Activated T-helper 1 cell treated with anti-CD3 and anti-CD28 coated beads, Interleukin-12 subunit alpha, Interleukin-12 subunit beta, Interleukin-2, Interleukin-4 antibody, amounts not matched to agents 30 ng/mL and 10 ng/mL and 1 ng/mL, durations not matched to agents 14 hours and 24 hours and 36 hours (primary cell): ENCODE measurements at regions of chr3 and their contacts with region 1.

Region 1: DNA sequence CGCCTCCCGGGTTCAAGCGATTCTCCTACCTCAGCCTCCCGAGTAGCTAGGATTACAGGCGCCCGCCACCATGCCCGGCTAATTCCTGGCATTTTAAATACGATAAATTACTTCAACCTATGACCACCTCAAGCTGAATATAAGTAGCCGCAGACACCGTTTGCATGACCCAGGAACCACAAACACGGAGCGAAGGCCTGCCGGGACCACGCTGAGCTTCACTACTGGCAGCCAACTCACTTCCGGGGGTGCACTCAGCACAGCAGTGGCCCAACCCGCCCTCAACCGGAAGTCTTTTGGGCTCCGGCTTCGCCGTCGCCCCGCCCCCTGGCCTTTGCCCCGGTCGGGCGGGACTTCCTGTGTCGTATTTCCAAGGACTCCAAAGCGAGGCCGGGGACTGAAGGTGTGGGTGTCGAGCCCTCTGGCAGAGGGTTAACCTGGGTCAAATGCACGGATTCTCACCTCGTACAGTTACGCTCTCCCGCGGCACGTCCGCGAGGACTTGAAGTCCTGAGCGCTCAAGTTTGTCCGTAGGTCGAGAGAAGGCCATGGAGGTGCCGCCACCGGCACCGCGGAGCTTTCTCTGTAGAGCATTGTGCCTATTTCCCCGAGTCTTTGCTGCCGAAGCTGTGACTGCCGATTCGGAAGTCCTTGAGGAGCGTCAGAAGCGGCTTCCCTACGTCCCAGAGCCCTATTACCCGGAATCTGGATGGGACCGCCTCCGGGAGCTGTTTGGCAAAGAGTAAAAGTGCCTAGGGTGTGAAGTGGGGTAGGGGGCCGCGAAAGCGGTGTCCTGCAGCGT is at the start of gene TIMMDC1:
- DNase-seq: peak; percentile 96
- H3K4me3 Mint-ChIP-seq: peak within 1 kb of the TSS; percentile 100
- H3K27ac Mint-ChIP-seq: peak within 1 kb of the TSS; percentile 99
- H3K4me1 Mint-ChIP-seq: peaks cover 33% of the 10 kb centered on the region
- H3K27me3 Mint-ChIP-seq: no peaks in the 10 kb centered on the region
- total RNA-seq, gene TIMMDC1: 124 and 126 TPM in 2 replicates

Region 2: GRCh38 chr3:119395923-119396358 is 102.4 kb before region 1 on chr3:
- intact Hi-C with region 1: loop called (anchors 5 kb)
- DNase-seq: peak; percentile 2
- H3K4me3 Mint-ChIP-seq: no peak overlapping the region
- H3K27ac Mint-ChIP-seq: peak overlapping the region; percentile 63
- H3K4me1 Mint-ChIP-seq: peaks cover 36% of the 10 kb centered on the region
- H3K27me3 Mint-ChIP-seq: peaks cover 9% of the 10 kb centered on the region

Region 3: GRCh38 chr3:119463171-119464169 is 34.9 kb before region 1 on chr3 and contains the start of gene TMEM39A:
- intact Hi-C with region 1: loop called (anchors 1 kb)
- DNase-seq: peak; percentile 98
- H3K4me3 Mint-ChIP-seq: peak within 1 kb of the TSS; percentile 98
- H3K27ac Mint-ChIP-seq: peak within 1 kb of the TSS; percentile 97
- H3K4me1 Mint-ChIP-seq: peaks cover 49% of the 10 kb centered on the region
- H3K27me3 Mint-ChIP-seq: peaks cover 3% of the 10 kb centered on the region
- total RNA-seq, gene TMEM39A: 51.3 and 56.9 TPM in 2 replicates

Region 4: DNA sequence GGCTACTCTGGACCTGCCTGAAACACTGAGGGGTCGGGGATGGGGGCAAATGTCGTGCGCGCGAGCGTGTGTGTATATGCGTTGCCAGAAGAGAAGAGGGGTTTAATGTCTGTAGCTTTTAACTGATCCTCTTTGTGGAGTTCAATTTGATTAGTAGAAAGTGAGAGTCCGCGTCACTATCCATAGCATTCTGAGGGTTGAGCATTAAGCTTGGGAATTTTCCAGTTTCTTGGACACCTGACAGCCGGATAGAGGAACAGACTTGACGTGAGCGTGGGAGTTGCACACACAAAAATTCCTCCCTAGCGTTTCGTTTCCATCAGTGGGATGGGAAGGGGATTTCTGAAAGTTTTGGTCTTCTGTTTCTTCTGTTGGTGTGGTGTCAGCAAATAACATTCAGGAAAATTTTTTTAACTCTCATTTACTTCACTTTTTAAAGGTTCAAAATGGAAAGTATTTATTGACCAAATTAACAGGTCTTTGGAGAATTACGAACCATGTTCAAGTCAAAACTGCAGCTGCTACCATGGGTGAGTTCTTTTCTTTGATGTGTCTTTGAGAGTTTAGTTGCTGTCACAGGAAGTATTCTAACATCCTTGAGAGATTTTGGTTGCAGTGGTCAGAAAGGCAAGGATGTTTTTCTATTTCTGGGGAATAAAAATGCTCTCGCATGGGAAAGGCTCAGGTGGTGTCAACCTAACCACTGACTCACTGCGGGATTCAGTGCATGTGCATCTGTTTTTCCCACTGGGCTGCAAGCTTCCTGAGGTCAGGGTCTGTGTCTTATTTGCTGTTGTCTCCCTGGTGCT is 28.8 kb before region 1 on chr3:
- intact Hi-C with region 1: loop called (anchors 1 kb)
- DNase-seq: no peak
- H3K4me3 Mint-ChIP-seq: peak overlapping the region; percentile 95
- H3K27ac Mint-ChIP-seq: peak overlapping the region; percentile 93
- H3K4me1 Mint-ChIP-seq: peaks cover 39% of the 10 kb centered on the region
- H3K27me3 Mint-ChIP-seq: no peaks in the 10 kb centered on the region

Region 5: GRCh38 chr3:119579366-119580165 is 81.2 kb after region 1 on chr3 and contains the start of gene ADPRH:
- intact Hi-C with region 1: loop called (anchors 5 kb)
- DNase-seq: peak; percentile 47
- H3K4me3 Mint-ChIP-seq: peak within 1 kb of the TSS; percentile 90
- H3K27ac Mint-ChIP-seq: peak within 1 kb of the TSS; percentile 95
- H3K4me1 Mint-ChIP-seq: peaks cover 37% of the 10 kb centered on the region
- H3K27me3 Mint-ChIP-seq: peaks cover 6% of the 10 kb centered on the region
- total RNA-seq, gene ADPRH: 3.8 and 4.6 TPM in 2 replicates

Region 6: DNA sequence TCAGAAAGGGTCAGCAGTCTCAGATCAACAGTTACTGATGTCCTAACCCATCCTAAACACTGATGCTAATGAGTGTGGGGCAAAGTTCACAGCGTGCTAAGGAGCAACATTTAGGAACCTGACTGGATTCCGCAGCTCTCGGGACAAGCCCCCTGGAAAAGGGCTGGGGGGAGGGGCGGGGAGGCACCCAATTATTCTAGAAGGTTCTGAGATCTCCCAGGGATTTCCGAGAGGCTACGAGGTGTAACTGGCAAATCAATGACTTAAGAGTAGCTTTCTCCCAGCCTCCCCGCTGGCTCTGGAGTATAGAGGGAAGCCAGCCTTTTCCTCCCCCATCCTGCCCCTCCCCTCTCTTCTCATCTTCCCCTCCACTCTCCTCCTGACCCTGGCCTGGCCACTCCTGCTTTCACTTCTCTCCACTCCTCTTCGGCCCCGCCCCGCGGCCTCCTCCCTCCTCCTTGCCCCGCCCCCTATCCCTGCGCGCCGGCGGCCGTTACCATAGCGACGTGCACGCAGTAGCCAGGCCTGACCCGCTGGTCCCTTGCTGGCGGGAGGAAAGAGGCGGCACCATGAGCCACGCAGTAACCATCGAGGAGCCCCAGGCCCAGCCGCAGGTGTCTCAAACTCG is 204.3 kb after region 1 on chr3 and contains the start of gene CFAP91:
- intact Hi-C with region 1: loop called (anchors 1 kb)
- DNase-seq: peak; percentile 78
- H3K4me3 Mint-ChIP-seq: peak within 1 kb of the TSS; percentile 67
- H3K27ac Mint-ChIP-seq: no peak within 1 kb of the TSS
- H3K4me1 Mint-ChIP-seq: peaks cover 37% of the 10 kb centered on the region
- H3K27me3 Mint-ChIP-seq: peaks cover 29% of the 10 kb centered on the region
- total RNA-seq, gene CFAP91: 0.24 TPM in 1 of 2 replicates, not detected in the other

Region 7: DNA sequence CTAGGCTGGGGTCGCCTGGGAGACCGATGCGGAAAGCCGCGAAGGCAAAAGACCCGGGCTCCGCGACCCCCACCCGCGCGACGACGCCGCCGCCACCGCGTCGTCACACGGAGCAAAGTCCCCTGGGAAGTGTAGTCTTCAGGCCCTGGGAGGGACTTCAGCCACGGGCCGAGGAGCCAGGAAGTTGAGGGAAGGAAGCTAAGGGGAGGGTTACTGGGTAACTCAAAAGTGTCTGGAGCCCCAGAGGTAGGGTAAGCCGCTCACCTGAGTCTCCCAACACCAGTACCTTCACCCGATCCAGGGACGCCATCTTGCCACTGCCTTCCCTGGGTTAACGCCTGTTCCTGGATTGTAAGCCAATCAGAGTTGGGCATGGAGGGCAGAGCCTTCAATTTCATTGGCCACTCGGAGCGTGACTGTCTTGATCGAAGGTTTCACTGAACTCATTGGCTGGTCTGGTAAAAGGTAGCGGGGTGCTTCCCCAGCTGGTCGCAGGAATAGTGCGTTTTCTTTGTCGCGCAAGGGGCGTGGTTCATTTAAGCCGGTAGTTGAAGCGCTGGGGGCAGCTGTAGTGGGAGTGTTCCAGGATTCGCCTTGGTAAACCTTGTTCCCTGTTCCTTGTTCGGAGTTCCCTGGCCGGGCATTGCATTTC is 1243.9 kb after region 1 on chr3 and contains the starts of genes GTF2E1 and RABL3:
- intact Hi-C with region 1: loop called (anchors 5 kb)
- DNase-seq: peak; percentile 95
- H3K4me3 Mint-ChIP-seq: peak within 1 kb of the TSS; percentile 84
- H3K27ac Mint-ChIP-seq: peak within 1 kb of the TSS; percentile 89
- H3K4me1 Mint-ChIP-seq: peaks cover 22% of the 10 kb centered on the region
- H3K27me3 Mint-ChIP-seq: no peaks in the 10 kb centered on the region
- total RNA-seq, gene GTF2E1: 25.3 and 29.2 TPM in 2 replicates
- total RNA-seq, gene RABL3: 24.3 and 25.6 TPM in 2 replicates